ENCODE measurements at regions of chr11 and their contacts with region 1.

Region 1: DNA sequence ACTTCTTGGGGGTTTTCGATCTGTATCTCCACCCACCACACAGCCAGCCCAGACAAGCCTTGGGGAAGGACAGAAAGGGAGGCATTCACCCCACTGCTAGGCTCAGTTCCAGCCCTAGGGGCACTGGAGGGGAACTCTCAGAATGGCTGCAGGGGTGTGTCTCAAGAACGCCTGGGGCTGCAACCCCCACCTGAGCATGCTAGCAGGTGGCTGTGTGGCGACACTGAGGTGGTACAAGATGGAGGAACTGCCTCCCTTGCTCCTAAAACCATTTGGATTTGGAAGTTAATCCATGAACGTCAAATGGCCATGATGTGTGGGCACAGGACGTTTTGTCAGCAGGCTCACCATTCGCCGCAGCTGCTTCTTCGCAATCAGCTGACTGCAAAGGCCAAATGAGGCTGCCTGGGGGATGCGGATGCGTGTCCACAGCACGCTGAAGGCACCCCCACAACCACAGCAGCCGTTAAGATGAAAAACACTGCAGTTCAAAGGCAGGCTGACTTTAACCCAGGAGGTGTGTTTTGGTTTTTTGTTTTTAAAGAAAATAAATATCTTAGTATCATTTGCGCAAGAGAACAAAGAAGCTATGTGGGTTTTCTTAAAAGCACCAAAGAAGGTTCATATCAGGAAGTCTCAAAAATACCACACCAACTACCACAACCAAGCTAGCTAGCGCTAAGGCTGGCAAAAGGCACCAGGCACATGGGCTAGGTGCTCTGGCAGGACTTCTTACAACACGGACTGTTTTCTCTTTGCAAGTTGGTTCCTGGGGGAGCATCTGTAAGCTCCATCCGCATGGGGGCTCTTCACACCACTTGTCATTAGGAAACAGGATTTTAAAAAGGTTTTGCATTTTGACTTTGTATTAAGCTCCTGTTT is 22.2 kb upstream of the NAP1L4 start:
- DNase-seq: peak; percentile 43 to 95 (median 90)
- ATAC-seq: peak; percentile 93
- H3K4me3 ChIP-seq: peak overlapping the region; percentile 46
- H3K4me3 Mint-ChIP-seq: peak overlapping the region; percentile 60 to 82 (median 72)
- H3K27ac ChIP-seq: peak overlapping the region; percentile 45
- H3K27ac Mint-ChIP-seq: peak overlapping the region; percentile 80 to 97 (median 93)
- H3K4me1 ChIP-seq: peaks cover 30 to 36% of the 10 kb centered on the region in 2 donors
- H3K4me1 Mint-ChIP-seq: peaks cover 11 to 60% (median 40%) of the 10 kb centered on the region in 7 donors
- H3K27me3 ChIP-seq: no peaks in the 10 kb centered on the region
- H3K27me3 Mint-ChIP-seq: no peaks in the 10 kb centered on the region

Region 2: DNA sequence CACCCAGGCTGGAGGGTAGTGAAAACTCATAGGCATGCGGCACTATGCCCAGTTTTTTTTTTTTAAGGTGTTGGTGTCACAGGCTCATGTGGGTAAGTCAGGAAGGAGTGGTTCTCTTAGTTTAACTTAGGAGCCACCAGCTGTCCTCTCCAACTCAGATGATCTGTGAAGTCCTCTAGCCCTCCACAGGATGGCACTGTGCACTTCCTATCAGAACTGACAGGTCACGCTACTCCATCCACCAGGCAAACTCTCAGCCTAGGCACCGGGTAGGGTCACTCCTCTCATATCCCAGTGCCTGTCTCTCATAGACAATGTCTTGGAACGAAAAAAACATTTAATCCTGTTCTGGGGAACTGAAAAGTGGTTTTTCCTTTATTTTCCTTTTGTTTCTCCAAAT is 38.7 kb before region 1 on chr11:
- CTCF ChIA-PET with region 1: interaction called, 39 read pairs
- POLR2A ChIA-PET with region 1: interaction called, 7 read pairs
- intact Hi-C with region 1: loop called in 1 of 2 experiments (anchors 1 kb)
- DNase-seq: peak in 8 of 9 donors; percentile 26 to 68 (median 48)
- ATAC-seq: peak; percentile 95
- H3K4me3 ChIP-seq: no peak overlapping the region
- H3K4me3 Mint-ChIP-seq: no peak overlapping the region
- H3K27ac ChIP-seq: no peak overlapping the region
- H3K27ac Mint-ChIP-seq: peak overlapping the region in 3 of 9 donors; percentile 24 to 66 (median 41)
- H3K4me1 ChIP-seq: peaks cover 0 to 7% of the 10 kb centered on the region in 2 donors
- H3K4me1 Mint-ChIP-seq: peaks cover 21 to 51% (median 37%) of the 10 kb centered on the region in 7 donors
- H3K27me3 ChIP-seq: no peaks in the 10 kb centered on the region
- H3K27me3 Mint-ChIP-seq: no peaks in the 10 kb centered on the region

Region 3: DNA sequence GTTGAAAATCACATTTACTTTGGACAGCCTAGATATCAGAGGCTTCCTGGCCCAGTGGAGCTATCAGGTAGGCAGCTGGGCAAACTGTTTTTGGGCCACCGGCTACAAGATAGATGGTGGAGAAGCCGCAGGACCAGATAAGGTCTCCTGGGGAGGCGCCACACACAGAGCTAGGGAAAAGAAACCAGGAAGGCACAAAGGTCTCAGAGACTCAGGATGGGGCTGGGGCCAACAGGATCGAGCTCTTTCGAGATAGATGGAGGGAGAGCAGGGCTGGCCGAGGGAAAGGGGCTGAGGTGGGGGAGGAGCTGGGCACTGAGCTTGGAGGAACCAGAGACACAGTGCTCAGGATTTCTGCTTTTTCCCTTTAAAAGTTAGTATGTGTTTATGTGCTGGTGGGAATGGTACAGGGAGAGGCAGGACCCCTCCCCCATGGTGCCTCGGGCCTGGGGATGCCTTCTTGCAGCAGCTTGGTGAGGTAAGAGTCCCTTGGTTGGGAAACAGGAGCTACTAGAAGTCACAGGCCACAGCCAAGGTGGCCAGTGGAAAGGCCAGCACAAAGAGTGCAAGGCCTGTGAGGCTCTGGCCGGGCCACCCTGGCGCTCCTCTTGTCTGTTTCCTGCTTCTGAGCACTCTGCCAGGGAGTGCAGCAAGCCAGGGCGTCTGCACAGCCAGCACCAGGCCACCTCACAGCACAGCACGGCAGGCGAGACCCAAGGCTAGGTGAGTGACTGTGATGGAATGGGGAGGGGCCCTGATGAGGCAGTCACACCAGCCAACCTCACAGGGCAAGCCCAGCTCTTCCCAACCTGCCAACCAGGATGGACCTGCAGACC is 10.7 kb before region 1 on chr11:
- CTCF ChIA-PET with region 1: interaction called, 3 read pairs
- POLR2A ChIA-PET with region 1: interaction called, 10 read pairs
- intact Hi-C with region 1: no loop called
- DNase-seq: no peak
- ATAC-seq: no peak
- H3K4me3 ChIP-seq: no peak overlapping the region
- H3K4me3 Mint-ChIP-seq: no peak overlapping the region
- H3K27ac ChIP-seq: no peak overlapping the region
- H3K27ac Mint-ChIP-seq: no peak overlapping the region
- H3K4me1 ChIP-seq: no peaks in the 10 kb centered on the region
- H3K4me1 Mint-ChIP-seq: peaks cover 0 to 9% (median 0%) of the 10 kb centered on the region in 7 donors
- H3K27me3 ChIP-seq: no peaks in the 10 kb centered on the region
- H3K27me3 Mint-ChIP-seq: no peaks in the 10 kb centered on the region

Region 4: GRCh38 chr11:3037040-3037944 is 23.0 kb after region 1 on chr11:
- CTCF ChIA-PET with region 1: interaction called, 6 read pairs
- POLR2A ChIA-PET with region 1: no interaction called
- intact Hi-C with region 1: loop called in 1 of 2 experiments (anchors 2 kb)
- DNase-seq: peak in 7 of 9 donors; percentile 9 to 43 (median 23)
- ATAC-seq: peak; percentile 72
- H3K4me3 ChIP-seq: no peak overlapping the region
- H3K4me3 Mint-ChIP-seq: peak overlapping the region in 1 of 10 donors; percentile 43
- H3K27ac ChIP-seq: no peak overlapping the region
- H3K27ac Mint-ChIP-seq: peak overlapping the region in 4 of 9 donors; percentile 18 to 87 (median 48)
- H3K4me1 ChIP-seq: peaks cover 3 to 7% of the 10 kb centered on the region in 2 donors
- H3K4me1 Mint-ChIP-seq: peaks cover 12 to 32% (median 18%) of the 10 kb centered on the region in 7 donors
- H3K27me3 ChIP-seq: no peaks in the 10 kb centered on the region
- H3K27me3 Mint-ChIP-seq: no peaks in the 10 kb centered on the region

Region 5: GRCh38 chr11:3057069-3057963 is 43.0 kb after region 1 on chr11 and contains the start of gene CARS1:
- CTCF ChIA-PET with region 1: no interaction called
- POLR2A ChIA-PET with region 1: no interaction called
- intact Hi-C with region 1: loop called (anchors 1 to 2 kb)
- DNase-seq: peak; percentile 82 to 93 (median 89)
- ATAC-seq: peak; percentile 99
- H3K4me3 ChIP-seq: peak within 1 kb of the TSS; percentile 85
- H3K4me3 Mint-ChIP-seq: peak within 1 kb of the TSS; percentile 86 to 95 (median 89)
- H3K27ac ChIP-seq: peak within 1 kb of the TSS; percentile 91
- H3K27ac Mint-ChIP-seq: peak within 1 kb of the TSS; percentile 44 to 89 (median 87)
- H3K4me1 ChIP-seq: peaks cover 14% of the 10 kb centered on the region in 2 donors
- H3K4me1 Mint-ChIP-seq: peaks cover 25 to 42% (median 39%) of the 10 kb centered on the region in 7 donors
- H3K27me3 ChIP-seq: no peaks in the 10 kb centered on the region
- H3K27me3 Mint-ChIP-seq: no peaks in the 10 kb centered on the region
- total RNA-seq, gene CARS1: 27.8 to 70.4 (median 53.7) TPM

Region 6: DNA sequence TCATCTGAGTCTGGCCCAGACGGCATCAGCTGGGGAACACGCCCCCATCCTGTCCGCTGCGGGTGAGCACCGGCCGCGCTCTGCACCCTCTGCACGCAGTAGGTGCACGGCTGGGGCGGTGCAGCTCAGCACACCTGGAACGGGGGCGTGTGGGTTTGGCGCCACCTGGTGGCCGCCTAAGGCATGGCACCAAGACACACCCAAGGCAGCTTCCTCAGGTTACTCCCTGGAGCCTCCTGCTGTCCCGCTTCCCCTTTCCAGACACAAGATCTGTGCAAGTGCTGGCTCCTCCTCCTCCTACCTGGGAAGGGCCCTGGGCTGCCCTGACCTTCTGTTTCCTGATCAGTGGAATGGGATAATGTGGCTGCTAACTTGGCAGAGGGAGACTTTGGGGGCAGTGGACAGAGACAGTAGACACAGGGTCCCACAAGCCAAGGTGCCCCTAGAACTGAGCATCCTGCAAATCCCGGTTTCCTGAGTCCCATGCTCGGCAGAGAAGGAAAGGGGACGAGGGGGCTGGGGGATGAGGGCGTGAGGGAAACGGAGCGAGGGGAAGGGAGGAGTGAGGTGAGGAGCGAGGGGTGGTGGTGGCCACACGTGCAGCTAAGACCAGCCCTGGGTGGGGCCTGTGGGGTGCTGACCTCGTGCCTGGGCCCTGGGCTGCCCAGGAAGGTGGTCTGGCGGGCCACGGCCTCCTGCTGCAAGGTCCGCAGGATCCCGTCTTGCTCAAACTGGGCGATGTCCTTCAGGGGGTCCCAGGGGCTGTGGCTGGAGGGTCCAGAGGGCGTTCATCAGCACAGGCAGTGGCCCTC is 77.7 kb after region 1 on chr11:
- CTCF ChIA-PET with region 1: interaction called, 8 read pairs
- POLR2A ChIA-PET with region 1: no interaction called
- intact Hi-C with region 1: loop called (anchors 1 to 5 kb)
- DNase-seq: peak; percentile 38 to 79 (median 66)
- ATAC-seq: peak; percentile 87
- H3K4me3 ChIP-seq: no peak overlapping the region
- H3K4me3 Mint-ChIP-seq: no peak overlapping the region
- H3K27ac ChIP-seq: no peak overlapping the region
- H3K27ac Mint-ChIP-seq: peak overlapping the region in 1 of 9 donors; percentile 26
- H3K4me1 ChIP-seq: no peaks in the 10 kb centered on the region
- H3K4me1 Mint-ChIP-seq: peaks cover 0 to 16% (median 0%) of the 10 kb centered on the region in 7 donors
- H3K27me3 ChIP-seq: no peaks in the 10 kb centered on the region
- H3K27me3 Mint-ChIP-seq: peaks cover 0 to 4% (median 0%) of the 10 kb centered on the region in 5 donors

Measured in naive thymus-derived CD4-positive, alpha-beta T cell (primary cell).